GM12878 (cell line): ENCODE measurements at regions of chr13 and their contacts with region 1.

Region 1: DNA sequence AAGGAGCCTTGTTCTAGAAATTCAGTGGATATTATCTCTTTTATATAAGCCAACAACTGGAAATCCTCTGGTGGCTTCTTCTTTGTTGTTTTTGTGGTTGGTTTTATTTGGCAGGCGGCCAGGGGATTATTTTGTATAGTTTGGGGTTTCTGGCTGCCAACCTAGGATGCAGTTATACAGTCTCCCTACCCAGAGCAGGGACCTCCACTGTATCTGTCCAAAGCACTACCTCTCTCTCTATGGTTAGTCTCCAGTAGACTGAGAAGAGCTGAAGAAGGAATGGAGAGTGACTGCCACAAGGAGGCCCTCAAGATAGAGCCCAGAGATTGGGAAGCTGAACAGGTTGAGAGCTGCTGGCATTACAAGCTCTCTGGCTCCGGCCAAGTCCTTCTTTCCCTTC is 80.2 kb downstream of the ZAR1L start:
- DNase-seq: no peak
- ATAC-seq: no peak; the same call in 2 of the 3 replicates
- H3K4me3 ChIP-seq: no peak overlapping the region
- H3K27ac ChIP-seq: no peak overlapping the region
- H3K4me1 ChIP-seq: no peaks in the 10 kb centered on the region
- H3K27me3 ChIP-seq: no peaks in the 10 kb centered on the region
- CTCF ChIP-seq: no peak
- EP300 ChIP-seq: no peak
- POLR2A ChIP-seq: no peak
- RAD21 ChIP-seq: no peak

Region 2: GRCh38 chr13:32246468-32246867 is 11.5 kb after region 1 on chr13:
- CTCF ChIA-PET with region 1: interaction called, 37 read pairs
- POLR2A ChIA-PET with region 1: no interaction called
- RAD21 ChIA-PET with region 1: no interaction called
- SMC1A ChIA-PET with region 1: interaction called, 6 read pairs
- in situ Hi-C with region 1: no loop called
- intact Hi-C with region 1: no loop called
- DNase-seq: no peak
- ATAC-seq: peak; percentile 98
- H3K4me3 ChIP-seq: no peak overlapping the region
- H3K27ac ChIP-seq: no peak overlapping the region
- H3K4me1 ChIP-seq: peaks cover 9% of the 10 kb centered on the region
- H3K27me3 ChIP-seq: no peaks in the 10 kb centered on the region
- CTCF ChIP-seq: peak; percentile 68 to 81 (median 73)
- EP300 ChIP-seq: no peak
- POLR2A ChIP-seq: no peak
- RAD21 ChIP-seq: peak; percentile 55